ENCODE measurements at regions of chr12 and their contacts with region 1.

Region 1: GRCh38 chr12:19643635-19644034 is 204.3 kb downstream of the AEBP2 start:
- DNase-seq: no peak
- ATAC-seq: no peak
- H3K4me3 ChIP-seq: no peak overlapping the region
- H3K27ac ChIP-seq: no peak overlapping the region
- H3K4me1 ChIP-seq: peaks cover 2 to 8% of the 10 kb centered on the region in 2 donors
- H3K27me3 ChIP-seq: no peaks in the 10 kb centered on the region
- CTCF ChIP-seq: peak in 1 of 5 experiments; percentile 11
- POLR2A ChIP-seq: no peak

Region 2: GRCh38 chr12:19507823-19508222 is 135.8 kb before region 1 on chr12:
- in situ Hi-C with region 1: no loop called
- intact Hi-C with region 1: loop called (anchors 2 kb)
- DNase-seq: no peak
- ATAC-seq: no peak
- H3K4me3 ChIP-seq: no peak overlapping the region
- H3K27ac ChIP-seq: no peak overlapping the region
- H3K4me1 ChIP-seq: no peaks in the 10 kb centered on the region
- H3K27me3 ChIP-seq: no peaks in the 10 kb centered on the region
- CTCF ChIP-seq: peak in 2 of 5 experiments; percentile 13 to 26
- POLR2A ChIP-seq: no peak

Region 3: GRCh38 chr12:19616781-19617180 is 26.9 kb before region 1 on chr12:
- in situ Hi-C with region 1: no loop called
- intact Hi-C with region 1: loop called (anchors 1 kb)
- DNase-seq: no peak
- ATAC-seq: no peak
- H3K4me3 ChIP-seq: no peak overlapping the region
- H3K27ac ChIP-seq: no peak overlapping the region
- H3K4me1 ChIP-seq: no peaks in the 10 kb centered on the region
- H3K27me3 ChIP-seq: no peaks in the 10 kb centered on the region
- CTCF ChIP-seq: no peak
- POLR2A ChIP-seq: no peak

Measured in gastrocnemius medialis (tissue), 4 donors.